Heart right ventricle (tissue), 16 donors: ENCODE measurements at regions of chr15 and their contacts with region 1.

Region 1: DNA sequence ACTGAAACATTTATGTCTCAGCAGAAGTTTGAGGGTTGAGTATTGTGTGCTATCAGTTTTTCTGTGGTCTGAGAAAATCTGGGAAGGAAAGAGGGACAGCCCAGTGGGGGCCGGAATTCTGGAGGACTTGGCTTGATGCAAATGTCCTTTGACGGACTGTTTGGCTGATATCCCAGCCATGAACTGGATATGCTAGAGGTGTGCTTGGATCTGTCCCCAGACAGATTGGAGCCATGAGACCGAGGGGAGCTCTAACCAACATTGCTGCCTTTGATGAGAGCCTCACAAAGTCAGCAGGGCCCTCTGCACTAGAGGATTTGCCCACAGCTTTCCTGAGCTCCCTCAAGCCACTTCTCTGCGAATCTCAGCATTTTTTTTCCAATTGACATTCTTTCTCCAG is 405.6 kb downstream of the NTRK3 start:
- DNase-seq: peak; percentile 16 to 33
- ATAC-seq: peak; percentile 67 to 96 (median 89)
- H3K4me3 ChIP-seq: no peak overlapping the region
- H3K27ac ChIP-seq: peak overlapping the region in 7 of 10 donors; percentile 4 to 79 (median 52)
- H3K4me1 ChIP-seq: peaks cover 0 to 16% (median 0%) of the 10 kb centered on the region in 9 donors
- H3K27me3 ChIP-seq: no peaks in the 10 kb centered on the region
- CTCF ChIP-seq: no peak

Region 2: GRCh38 chr15:87732976-87733375 is 117.9 kb before region 1 on chr15:
- intact Hi-C with region 1: loop called in 1 of 10 experiments (anchors 10 kb)
- DNase-seq: no peak
- ATAC-seq: peak in 3 of 8 donors; percentile 41 to 62 (median 54)
- H3K4me3 ChIP-seq: no peak overlapping the region
- H3K27ac ChIP-seq: no peak overlapping the region
- H3K4me1 ChIP-seq: peaks cover 0 to 33% (median 7%) of the 10 kb centered on the region in 9 donors
- H3K27me3 ChIP-seq: no peaks in the 10 kb centered on the region
- CTCF ChIP-seq: no peak

Region 3: GRCh38 chr15:87881026-87881425 is 30.1 kb after region 1 on chr15:
- intact Hi-C with region 1: no loop called
- DNase-seq: no peak
- ATAC-seq: peak in 3 of 8 donors; percentile 11 to 41 (median 28)
- H3K4me3 ChIP-seq: no peak overlapping the region
- H3K27ac ChIP-seq: no peak overlapping the region
- H3K4me1 ChIP-seq: peaks cover 0 to 12% (median 4%) of the 10 kb centered on the region in 9 donors
- H3K27me3 ChIP-seq: no peaks in the 10 kb centered on the region
- CTCF ChIP-seq: no peak

Region 4: GRCh38 chr15:88018856-88019641 is 168.1 kb after region 1 on chr15:
- intact Hi-C with region 1: loop called in 1 of 10 experiments (anchors 10 kb)
- DNase-seq: no peak
- ATAC-seq: no peak
- H3K4me3 ChIP-seq: no peak overlapping the region
- H3K27ac ChIP-seq: no peak overlapping the region
- H3K4me1 ChIP-seq: peaks cover 0 to 3% (median 0%) of the 10 kb centered on the region in 9 donors
- H3K27me3 ChIP-seq: peaks cover 0 to 8% (median 0%) of the 10 kb centered on the region in 7 donors
- CTCF ChIP-seq: no peak

Region 5: DNA sequence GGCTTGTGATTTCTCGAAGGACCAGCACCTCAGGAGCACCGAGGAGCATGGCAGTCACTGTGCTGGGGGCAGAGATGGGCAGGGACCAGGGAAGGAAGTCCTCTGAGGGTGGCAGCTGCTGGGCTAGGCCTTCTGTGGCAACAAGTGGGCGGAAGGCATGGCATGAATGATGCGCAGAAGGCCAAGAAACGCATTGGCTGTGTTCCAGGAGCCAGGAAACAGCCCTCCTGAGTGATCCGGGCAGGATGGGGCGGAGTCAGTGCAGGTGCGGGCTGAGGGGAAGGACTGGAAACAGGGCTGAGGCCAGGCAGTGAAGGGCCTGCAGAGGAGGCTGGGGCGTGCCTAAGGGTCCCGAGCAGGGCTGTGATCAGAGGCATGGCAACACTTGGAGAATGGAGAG is 640.2 kb after region 1 on chr15:
- intact Hi-C with region 1: no loop called
- DNase-seq: no peak
- ATAC-seq: peak in 1 of 8 donors; percentile 36
- H3K4me3 ChIP-seq: no peak overlapping the region
- H3K27ac ChIP-seq: no peak overlapping the region
- H3K4me1 ChIP-seq: no peaks in the 10 kb centered on the region
- H3K27me3 ChIP-seq: no peaks in the 10 kb centered on the region
- CTCF ChIP-seq: no peak